ENCODE measurements at regions of chr5 and their contacts with region 1.

Region 1: DNA sequence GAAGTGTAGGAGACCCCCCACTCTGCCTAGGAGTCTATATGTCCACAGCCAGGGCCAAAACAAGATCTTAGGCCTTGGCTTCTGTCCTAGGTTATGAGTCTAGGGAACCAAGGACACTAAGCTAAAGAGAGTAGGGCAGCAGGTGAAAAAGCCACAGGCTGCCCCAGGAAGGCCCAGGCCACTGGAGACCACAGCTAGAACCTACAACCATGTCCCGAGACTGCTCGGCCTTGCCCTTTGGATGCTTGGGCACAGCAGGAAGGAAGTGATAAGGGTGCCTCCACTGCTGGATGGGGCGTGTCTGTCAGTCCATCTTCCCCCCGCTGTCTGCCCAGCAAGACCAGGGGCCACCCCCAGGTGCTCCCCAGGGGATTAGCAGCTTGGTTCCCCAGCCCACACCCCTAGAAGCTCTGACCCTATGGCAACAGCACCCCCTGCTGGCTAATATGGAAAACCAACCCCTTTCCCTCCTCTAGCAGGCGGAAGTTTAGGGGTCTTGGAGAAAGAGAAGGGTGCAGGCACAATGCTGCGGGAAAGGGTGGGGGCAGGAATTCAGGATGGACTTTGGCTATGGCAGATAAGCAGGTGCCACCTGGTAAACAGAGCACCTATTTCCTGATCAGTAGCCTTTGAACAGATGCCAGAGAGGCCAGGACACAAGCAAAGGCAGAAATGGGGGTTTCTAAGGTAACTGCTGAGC is 10.5 kb upstream of the IRF1 start:
- H3K4me3 ChIP-seq: no peak overlapping the region
- H3K27ac ChIP-seq: no peak overlapping the region
- H3K4me1 ChIP-seq: no peaks in the 10 kb centered on the region
- CTCF ChIP-seq: peak; percentile 69

Region 2: DNA sequence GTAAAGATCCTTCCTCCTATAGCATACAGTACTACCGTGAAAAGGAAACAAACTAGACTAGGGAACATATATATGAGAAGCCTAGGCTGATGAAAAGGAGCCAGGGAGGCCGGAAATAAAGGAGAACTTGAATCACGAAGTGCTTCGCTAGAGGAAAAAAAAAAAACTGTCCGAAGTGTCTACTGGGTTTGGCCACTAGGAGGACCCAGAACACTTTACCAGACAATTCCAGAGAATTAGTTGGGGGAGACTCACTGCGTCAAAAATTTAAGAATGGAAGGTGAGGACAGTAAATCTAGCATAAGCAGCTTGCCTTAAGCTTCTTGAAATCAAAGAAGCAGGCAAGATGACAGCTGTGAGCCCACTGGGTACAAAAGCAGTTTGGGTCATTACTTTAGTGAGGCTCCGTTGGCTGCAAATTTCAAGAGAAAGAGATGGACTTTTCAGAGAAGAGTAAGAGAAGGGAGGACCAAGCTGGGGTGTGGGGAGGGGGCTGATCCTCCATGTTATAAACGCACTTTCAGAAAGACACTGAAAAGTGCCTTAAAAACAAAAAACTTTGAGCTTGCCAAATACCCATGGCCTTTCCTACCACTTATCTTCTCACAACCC is 320.8 kb before region 1 on chr5:
- CTCF ChIA-PET with region 1: interaction called, 14 read pairs
- POLR2A ChIA-PET with region 1: no interaction called
- H3K4me3 ChIP-seq: no peak overlapping the region
- H3K27ac ChIP-seq: no peak overlapping the region
- H3K4me1 ChIP-seq: no peaks in the 10 kb centered on the region
- CTCF ChIP-seq: peak; percentile 42; the same call in 1 of the 2 replicates

Region 3: GRCh38 chr5:132344775-132345524 is 156.1 kb before region 1 on chr5:
- CTCF ChIA-PET with region 1: no interaction called
- POLR2A ChIA-PET with region 1: no interaction called
- H3K4me3 ChIP-seq: no peak overlapping the region
- H3K27ac ChIP-seq: no peak overlapping the region
- H3K4me1 ChIP-seq: peaks cover 8% of the 10 kb centered on the region; the same call in 1 of the 2 replicates
- CTCF ChIP-seq: no peak

Region 4: DNA sequence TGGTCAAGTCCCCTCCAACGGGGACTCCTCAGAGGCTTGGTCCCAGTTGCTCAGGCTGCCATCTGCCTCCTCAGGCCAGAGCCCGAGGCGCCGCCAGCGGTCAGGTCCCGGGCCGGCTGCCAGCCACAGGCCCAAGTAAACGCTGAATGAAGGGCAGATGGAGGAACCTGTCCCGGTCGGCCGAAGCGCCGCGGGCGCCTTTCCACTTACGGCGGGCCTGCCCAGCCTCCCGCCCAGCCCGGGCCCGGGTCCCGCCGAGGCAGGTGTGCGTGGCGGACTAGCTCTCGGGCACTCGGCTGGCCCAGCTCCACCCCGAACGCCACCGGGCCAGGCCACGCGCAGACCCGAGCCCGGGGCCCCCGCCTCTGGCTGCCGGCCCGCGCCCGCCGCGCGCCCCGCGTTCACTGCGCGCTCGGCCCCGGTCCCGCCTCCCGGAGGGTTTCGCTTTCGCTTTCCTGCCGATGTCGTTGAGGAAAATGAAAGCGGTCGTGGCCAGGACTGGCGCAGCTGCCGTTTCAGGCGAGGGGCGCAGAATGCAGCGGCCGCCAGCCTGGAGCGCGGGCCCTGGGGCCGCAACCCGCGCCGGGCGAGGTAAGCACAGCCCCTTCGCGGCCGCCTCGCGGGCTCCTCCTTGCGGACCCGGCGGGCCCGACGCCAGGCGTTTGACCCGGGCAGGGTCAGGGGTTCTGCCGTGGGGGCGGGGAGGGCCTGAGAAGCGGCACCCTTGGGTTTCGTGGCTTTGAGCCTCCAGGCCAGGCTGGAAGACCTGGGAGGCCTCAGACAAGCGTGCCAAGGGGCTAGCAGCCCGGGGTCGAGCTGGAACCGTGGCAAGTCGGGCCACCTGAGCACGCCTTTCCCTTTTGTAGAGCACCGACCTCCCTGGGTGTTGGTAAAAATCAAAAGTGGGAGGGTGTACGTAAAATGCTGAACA is 90.4 kb before region 1 on chr5:
- CTCF ChIA-PET with region 1: interaction called, 18 read pairs
- POLR2A ChIA-PET with region 1: interaction called, 11 read pairs
- H3K4me3 ChIP-seq: peak overlapping the region; percentile 54
- H3K27ac ChIP-seq: peak overlapping the region; percentile 93
- H3K4me1 ChIP-seq: peaks cover 4% of the 10 kb centered on the region; the same call in 1 of the 2 replicates
- CTCF ChIP-seq: peak; percentile 55; the same call in 1 of the 2 replicates

Region 5: DNA sequence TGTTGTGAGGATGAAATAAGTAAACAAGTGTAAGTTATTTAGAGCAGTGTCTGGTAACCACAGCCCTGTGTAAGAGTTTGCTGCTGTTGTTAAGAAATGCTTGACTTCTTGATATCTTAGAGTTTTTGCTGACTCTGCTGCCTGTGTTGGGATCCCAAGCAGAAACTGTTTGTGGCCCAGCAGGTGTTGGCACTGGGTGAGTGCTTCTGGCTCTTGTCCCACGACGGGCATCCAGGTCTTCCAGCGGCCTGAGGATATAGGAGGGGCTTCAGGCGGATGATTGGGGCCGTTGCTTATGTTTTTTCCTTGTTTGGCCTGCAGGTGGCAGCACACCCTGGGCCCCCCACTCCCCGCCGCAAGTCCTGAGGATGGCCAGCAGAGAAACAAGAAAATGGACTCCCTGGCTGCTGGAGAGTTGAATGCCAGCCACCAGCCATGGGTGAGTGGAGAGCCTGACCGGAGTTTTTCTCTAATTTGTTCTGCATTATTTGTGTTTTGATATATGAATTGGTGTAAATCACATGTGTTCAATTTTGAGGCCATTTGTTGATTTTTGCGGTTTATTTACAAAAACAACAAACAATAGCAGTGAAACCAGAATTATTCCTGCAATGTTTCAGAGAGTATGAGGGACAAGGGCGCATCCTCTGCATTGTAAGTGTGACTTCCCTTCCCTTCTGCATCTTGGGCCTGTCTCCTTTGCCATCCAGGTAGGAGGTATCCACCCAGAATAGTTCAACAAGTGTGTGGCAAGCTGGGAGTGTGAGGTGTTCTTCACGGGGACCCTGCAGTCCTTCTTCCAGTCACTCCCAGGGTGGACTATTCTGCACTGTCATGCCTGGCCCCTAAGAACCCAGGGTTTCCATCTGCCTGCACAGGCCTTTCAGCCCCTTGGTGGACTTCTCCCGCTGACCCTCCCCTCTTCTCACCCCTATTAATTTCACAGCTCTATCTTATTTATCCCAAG is 81.3 kb before region 1 on chr5:
- CTCF ChIA-PET with region 1: interaction called, 18 read pairs
- POLR2A ChIA-PET with region 1: interaction called, 13 read pairs
- H3K4me3 ChIP-seq: no peak overlapping the region
- H3K27ac ChIP-seq: no peak overlapping the region
- H3K4me1 ChIP-seq: peaks cover under 1% of the 10 kb centered on the region; the same call in 1 of the 2 replicates
- CTCF ChIP-seq: peak; percentile 87

Region 6: DNA sequence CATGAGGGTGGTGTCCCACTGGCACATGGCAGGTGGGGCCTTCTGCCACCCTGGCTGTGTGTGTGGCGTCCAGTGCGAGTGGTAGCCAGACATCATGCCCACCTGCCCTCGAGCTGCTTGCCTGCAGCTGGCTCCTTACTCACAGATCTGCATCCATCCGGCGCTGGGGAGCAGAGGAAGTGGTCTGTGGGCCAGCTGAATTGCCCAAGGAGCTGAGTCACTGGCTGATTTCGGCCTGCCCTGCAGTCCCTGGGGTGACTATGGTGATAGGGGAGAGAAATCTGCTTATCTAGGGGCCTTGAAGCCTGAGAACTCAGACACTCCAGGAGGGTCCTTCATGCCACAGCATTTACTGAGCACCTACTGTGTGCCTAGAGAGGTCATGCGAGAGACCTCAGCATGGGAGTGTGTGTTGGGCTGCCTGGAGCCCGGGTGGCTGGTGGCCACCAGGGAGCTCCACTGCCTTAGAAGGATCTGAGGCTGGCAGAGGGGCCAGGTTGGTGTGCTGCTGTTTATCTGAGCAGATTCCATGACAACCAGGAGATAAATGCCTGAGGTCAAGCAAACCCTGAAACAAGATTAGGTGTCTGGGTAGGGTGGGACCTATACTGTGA is 74.4 kb before region 1 on chr5:
- CTCF ChIA-PET with region 1: interaction called, 16 read pairs
- POLR2A ChIA-PET with region 1: interaction called, 13 read pairs
- H3K4me3 ChIP-seq: no peak overlapping the region
- H3K27ac ChIP-seq: no peak overlapping the region
- H3K4me1 ChIP-seq: 0 out of 2 replicates have a peak, but pooled peaks cover 5% of the 10 kb centered on the region
- CTCF ChIP-seq: peak; percentile 28

Region 7: GRCh38 chr5:132490486-132491367 is 10.4 kb before region 1 on chr5 and contains the start of gene IRF1:
- CTCF ChIA-PET with region 1: interaction called, 6 read pairs
- POLR2A ChIA-PET with region 1: interaction called, 11 read pairs
- H3K4me3 ChIP-seq: peak within 1 kb of the TSS; percentile 73
- H3K27ac ChIP-seq: peak within 1 kb of the TSS; percentile 79; the same call in 1 of the 2 replicates
- H3K4me1 ChIP-seq: peaks cover 6% of the 10 kb centered on the region
- CTCF ChIP-seq: peak; percentile 58